CD4-positive, alpha-beta memory T cell (primary cell): ENCODE measurements at regions of chr17 and their contacts with region 1.

Region 1: GRCh38 chr17:78708510-78708973 is 73.5 kb downstream of the CYTH1 start:
- DNase-seq: peak; percentile 53 to 65 (median 59)
- H3K4me3 ChIP-seq: no peak overlapping the region
- H3K4me3 Mint-ChIP-seq: peak overlapping the region in 7 of 8 donors; percentile 43 to 78 (median 66)
- H3K27ac ChIP-seq: peak overlapping the region; percentile 31
- H3K27ac Mint-ChIP-seq: peak overlapping the region; percentile 83 to 95 (median 91)
- H3K4me1 ChIP-seq: peaks cover 54% of the 10 kb centered on the region
- H3K4me1 Mint-ChIP-seq: peaks cover 41 to 65% (median 54%) of the 10 kb centered on the region in 4 donors
- H3K27me3 ChIP-seq: no peaks in the 10 kb centered on the region
- H3K27me3 Mint-ChIP-seq: no peaks in the 10 kb centered on the region

Region 2: GRCh38 chr17:78497115-78497540 is 211.4 kb before region 1 on chr17:
- CTCF ChIA-PET with region 1: interaction called, 11 read pairs
- POLR2A ChIA-PET with region 1: interaction called, 4 read pairs
- intact Hi-C with region 1: loop called (anchors 1 kb)
- DNase-seq: peak; percentile 47 to 63 (median 58)
- H3K4me3 ChIP-seq: no peak overlapping the region
- H3K4me3 Mint-ChIP-seq: no peak overlapping the region
- H3K27ac ChIP-seq: no peak overlapping the region
- H3K27ac Mint-ChIP-seq: no peak overlapping the region
- H3K4me1 ChIP-seq: no peaks in the 10 kb centered on the region
- H3K4me1 Mint-ChIP-seq: no peaks in the 10 kb centered on the region
- H3K27me3 ChIP-seq: no peaks in the 10 kb centered on the region
- H3K27me3 Mint-ChIP-seq: no peaks in the 10 kb centered on the region

Region 3: GRCh38 chr17:78611607-78612006 is 96.9 kb before region 1 on chr17:
- CTCF ChIA-PET with region 1: no interaction called
- POLR2A ChIA-PET with region 1: no interaction called
- intact Hi-C with region 1: no loop called
- DNase-seq: no peak
- H3K4me3 ChIP-seq: no peak overlapping the region
- H3K4me3 Mint-ChIP-seq: no peak overlapping the region
- H3K27ac ChIP-seq: no peak overlapping the region
- H3K27ac Mint-ChIP-seq: no peak overlapping the region
- H3K4me1 ChIP-seq: no peaks in the 10 kb centered on the region
- H3K4me1 Mint-ChIP-seq: no peaks in the 10 kb centered on the region
- H3K27me3 ChIP-seq: no peaks in the 10 kb centered on the region
- H3K27me3 Mint-ChIP-seq: peaks cover 0 to 2% of the 10 kb centered on the region in 2 donors

Region 4: GRCh38 chr17:78645421-78646295 is 62.9 kb before region 1 on chr17:
- CTCF ChIA-PET with region 1: no interaction called
- POLR2A ChIA-PET with region 1: no interaction called
- intact Hi-C with region 1: no loop called
- DNase-seq: peak; percentile 34 to 78 (median 59)
- H3K4me3 ChIP-seq: no peak overlapping the region
- H3K4me3 Mint-ChIP-seq: peak overlapping the region; percentile 59 to 90 (median 85)
- H3K27ac ChIP-seq: peak overlapping the region; percentile 3
- H3K27ac Mint-ChIP-seq: peak overlapping the region; percentile 84 to 97 (median 92)
- H3K4me1 ChIP-seq: peaks cover 13% of the 10 kb centered on the region
- H3K4me1 Mint-ChIP-seq: peaks cover 6 to 16% (median 11%) of the 10 kb centered on the region in 4 donors
- H3K27me3 ChIP-seq: no peaks in the 10 kb centered on the region
- H3K27me3 Mint-ChIP-seq: peaks cover 3 to 7% of the 10 kb centered on the region in 2 donors

Region 5: DNA sequence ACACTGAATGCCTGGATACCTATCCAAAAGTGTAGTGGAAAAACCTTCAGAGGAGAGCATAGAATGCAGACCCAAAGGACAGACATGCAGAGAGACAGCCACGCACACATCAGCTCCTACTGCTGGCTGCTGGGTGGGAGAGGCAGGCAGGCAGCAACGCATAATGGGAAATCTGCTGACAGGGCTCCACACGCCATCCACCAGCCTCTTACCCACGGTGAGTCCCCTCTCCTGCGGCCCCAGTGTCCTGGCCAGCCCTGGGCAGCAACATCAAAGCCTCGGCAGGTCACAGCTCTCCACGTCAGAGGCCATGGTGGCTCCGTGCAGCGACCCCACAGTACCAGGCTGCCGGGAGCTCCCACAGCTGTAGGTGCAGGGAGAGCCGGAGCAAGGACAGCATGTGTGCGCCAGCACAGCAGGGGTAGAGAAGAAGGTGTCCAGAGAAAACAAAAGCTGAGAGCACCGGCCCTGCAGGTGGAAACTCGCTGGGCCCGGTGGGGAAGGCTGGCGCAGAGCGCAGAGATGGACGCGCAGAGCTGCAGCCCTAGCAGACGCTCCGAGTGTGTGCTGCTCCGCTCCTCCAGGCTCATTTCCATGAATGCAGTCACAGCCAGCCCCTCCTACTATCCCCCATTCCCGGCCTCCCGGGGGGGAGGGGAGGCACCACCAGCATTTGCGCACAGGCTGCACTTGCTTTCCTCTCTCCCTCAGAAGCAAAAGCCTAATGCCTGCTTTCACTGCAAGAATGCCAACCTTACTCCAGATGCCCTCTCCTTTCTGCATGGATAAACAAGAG is 14.7 kb after region 1 on chr17:
- CTCF ChIA-PET with region 1: interaction called, 24 read pairs
- POLR2A ChIA-PET with region 1: interaction called, 20 read pairs
- intact Hi-C with region 1: no loop called
- DNase-seq: no peak
- H3K4me3 ChIP-seq: no peak overlapping the region
- H3K4me3 Mint-ChIP-seq: peak overlapping the region; percentile 56 to 91 (median 70)
- H3K27ac ChIP-seq: no peak overlapping the region
- H3K27ac Mint-ChIP-seq: peak overlapping the region in 6 of 7 donors; percentile 77 to 92 (median 86)
- H3K4me1 ChIP-seq: peaks cover 100% of the 10 kb centered on the region
- H3K4me1 Mint-ChIP-seq: peaks cover 77 to 97% (median 90%) of the 10 kb centered on the region in 4 donors
- H3K27me3 ChIP-seq: no peaks in the 10 kb centered on the region
- H3K27me3 Mint-ChIP-seq: no peaks in the 10 kb centered on the region

Region 6: DNA sequence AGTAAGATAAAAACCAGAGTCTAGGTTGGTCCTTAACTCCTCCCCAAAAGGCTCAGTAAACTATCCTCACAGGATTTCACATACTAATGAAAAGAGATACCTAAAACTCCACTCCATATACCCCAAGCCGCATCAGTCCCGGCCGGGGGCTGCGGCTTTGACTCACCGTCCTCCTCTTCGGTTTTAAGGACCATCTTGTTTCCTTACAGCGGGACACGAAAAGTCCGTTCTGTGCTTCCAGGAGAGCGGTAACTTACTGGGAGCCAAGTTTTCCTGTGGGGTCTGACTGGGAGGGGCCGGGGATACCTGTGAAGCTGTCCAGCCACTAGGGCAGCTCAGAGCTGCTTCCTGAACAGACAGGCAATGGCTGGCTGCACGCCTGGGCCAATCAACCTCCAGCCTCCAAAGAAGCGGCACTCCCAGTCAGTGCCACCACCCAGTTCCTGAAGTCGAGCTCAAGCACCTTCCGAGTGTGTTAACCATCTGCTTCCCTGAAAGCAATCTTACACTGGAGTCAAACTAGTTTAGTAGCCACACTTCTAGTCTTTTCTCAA is 28.1 kb after region 1 on chr17:
- CTCF ChIA-PET with region 1: interaction called, 15 read pairs
- POLR2A ChIA-PET with region 1: interaction called, 5 read pairs
- intact Hi-C with region 1: no loop called
- DNase-seq: peak; percentile 69 to 84 (median 77)
- H3K4me3 ChIP-seq: peak overlapping the region; percentile 64 to 71
- H3K4me3 Mint-ChIP-seq: peak overlapping the region; percentile 91 to 98 (median 98)
- H3K27ac ChIP-seq: peak overlapping the region; percentile 82
- H3K27ac Mint-ChIP-seq: peak overlapping the region; percentile 85 to 98 (median 95)
- H3K4me1 ChIP-seq: peaks cover 89% of the 10 kb centered on the region
- H3K4me1 Mint-ChIP-seq: peaks cover 69 to 94% (median 83%) of the 10 kb centered on the region in 4 donors
- H3K27me3 ChIP-seq: no peaks in the 10 kb centered on the region
- H3K27me3 Mint-ChIP-seq: no peaks in the 10 kb centered on the region

Region 7: GRCh38 chr17:78769196-78769773 is 60.7 kb after region 1 on chr17:
- CTCF ChIA-PET with region 1: interaction called, 12 read pairs
- POLR2A ChIA-PET with region 1: interaction called, 3 read pairs
- intact Hi-C with region 1: no loop called
- DNase-seq: peak in 2 of 5 donors; percentile 44 to 54
- H3K4me3 ChIP-seq: peak overlapping the region in 1 of 2 donors; percentile 7
- H3K4me3 Mint-ChIP-seq: no peak overlapping the region
- H3K27ac ChIP-seq: peak overlapping the region; percentile 49
- H3K27ac Mint-ChIP-seq: no peak overlapping the region
- H3K4me1 ChIP-seq: peaks cover 98% of the 10 kb centered on the region
- H3K4me1 Mint-ChIP-seq: peaks cover 32 to 34% (median 33%) of the 10 kb centered on the region in 4 donors
- H3K27me3 ChIP-seq: no peaks in the 10 kb centered on the region
- H3K27me3 Mint-ChIP-seq: no peaks in the 10 kb centered on the region

Region 8: DNA sequence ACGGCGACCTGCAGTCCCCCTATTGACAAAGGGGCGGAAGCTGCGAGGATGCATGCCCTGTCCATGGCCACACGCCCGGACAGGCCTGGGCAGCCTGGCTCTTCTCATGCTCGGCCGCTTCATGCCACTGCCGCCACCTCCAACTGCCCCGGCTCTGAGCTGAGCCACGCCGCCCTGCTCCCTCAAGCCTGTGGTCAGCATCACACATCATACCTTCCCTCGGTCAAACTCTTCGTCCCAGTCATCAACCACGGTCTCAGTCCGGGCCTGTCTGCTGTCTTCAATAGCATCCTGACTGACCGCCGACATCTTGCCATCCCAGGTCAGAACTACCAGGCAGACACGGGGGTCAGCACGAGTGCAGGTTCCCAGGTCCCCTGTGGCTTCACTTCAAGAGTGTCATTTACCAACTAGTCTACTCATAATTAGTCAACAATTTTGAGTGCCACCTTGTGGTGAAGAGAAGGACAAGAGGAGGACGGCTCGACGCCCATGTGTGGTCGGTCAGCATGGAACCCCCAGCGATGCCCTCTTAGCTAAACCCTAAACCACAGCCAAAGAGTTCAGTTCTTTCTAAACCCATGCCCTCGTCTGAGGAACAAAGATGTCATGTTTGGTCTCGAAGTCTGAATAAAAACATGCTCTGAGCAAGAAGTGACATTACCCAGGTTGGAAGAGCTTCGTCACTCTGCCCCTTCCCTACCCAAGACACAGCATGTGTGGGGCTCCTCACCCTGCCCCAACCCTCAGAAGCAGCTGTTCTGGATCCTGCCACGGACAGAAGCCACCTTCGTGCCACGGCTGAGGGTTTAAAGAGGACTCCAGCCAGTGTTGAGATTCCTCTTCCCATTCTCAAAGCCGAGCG is 90.4 kb after region 1 on chr17:
- CTCF ChIA-PET with region 1: interaction called, 18 read pairs
- POLR2A ChIA-PET with region 1: interaction called, 3 read pairs
- intact Hi-C with region 1: loop called (anchors 1 kb)
- DNase-seq: peak in 4 of 5 donors; percentile 50 to 65 (median 57)
- H3K4me3 ChIP-seq: no peak overlapping the region
- H3K4me3 Mint-ChIP-seq: peak overlapping the region; percentile 28 to 79 (median 66)
- H3K27ac ChIP-seq: no peak overlapping the region
- H3K27ac Mint-ChIP-seq: peak overlapping the region; percentile 87 to 99 (median 94)
- H3K4me1 ChIP-seq: peaks cover 37% of the 10 kb centered on the region
- H3K4me1 Mint-ChIP-seq: peaks cover 46 to 79% (median 62%) of the 10 kb centered on the region in 4 donors
- H3K27me3 ChIP-seq: no peaks in the 10 kb centered on the region
- H3K27me3 Mint-ChIP-seq: no peaks in the 10 kb centered on the region

Region 9: DNA sequence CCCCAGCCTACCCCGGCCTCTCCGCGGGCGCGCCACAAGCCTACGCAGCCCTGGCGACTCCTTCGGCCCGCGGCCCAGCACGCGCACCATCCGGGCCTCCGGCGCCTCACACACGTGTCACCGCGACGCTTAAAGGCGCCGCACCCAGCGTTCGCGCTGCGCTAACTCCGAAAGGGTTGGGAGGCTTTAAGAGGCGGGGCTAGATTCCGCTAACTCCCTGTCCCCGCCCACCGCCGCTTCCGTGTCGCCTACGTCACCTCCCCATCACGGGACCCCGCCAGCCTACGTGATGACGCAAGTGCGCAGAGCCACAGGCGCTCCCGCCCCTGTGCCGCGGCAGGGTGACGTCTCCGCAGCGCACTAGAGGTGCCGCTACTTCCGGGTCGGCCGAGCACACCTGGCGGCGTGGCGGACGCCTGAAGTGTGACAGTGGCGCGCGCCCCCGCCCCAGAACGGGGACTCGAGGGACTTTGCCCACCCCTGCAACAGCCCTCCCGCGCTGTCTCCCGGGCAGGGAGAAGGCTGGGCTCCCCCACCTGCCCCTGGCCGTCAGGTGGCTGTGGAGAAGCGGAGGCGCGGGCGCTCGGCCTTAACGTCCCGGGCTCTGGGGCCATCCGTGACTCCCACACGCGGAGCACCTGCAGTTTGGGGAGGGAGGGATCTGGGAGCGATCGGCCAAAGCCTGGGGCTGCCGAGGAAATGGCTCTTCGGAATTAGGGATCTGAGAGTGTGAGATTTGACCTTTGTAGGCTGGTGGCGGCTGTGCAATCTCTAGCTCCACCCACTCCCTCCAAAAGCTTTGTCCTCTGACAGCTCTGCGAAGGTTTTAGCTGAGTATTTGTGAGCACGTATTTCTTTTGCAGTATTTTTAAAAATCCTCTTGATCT is 132.4 kb after region 1 on chr17 and contains the start of gene USP36:
- CTCF ChIA-PET with region 1: interaction called, 24 read pairs
- POLR2A ChIA-PET with region 1: no interaction called
- intact Hi-C with region 1: no loop called
- DNase-seq: peak; percentile 99 to 100 (median 99)
- H3K4me3 ChIP-seq: peak within 1 kb of the TSS; percentile 74 to 89
- H3K4me3 Mint-ChIP-seq: peak within 1 kb of the TSS; percentile 93 to 99 (median 96)
- H3K27ac ChIP-seq: peak within 1 kb of the TSS; percentile 95
- H3K27ac Mint-ChIP-seq: peak within 1 kb of the TSS; percentile 93 to 99 (median 99)
- H3K4me1 ChIP-seq: peaks cover 40% of the 10 kb centered on the region
- H3K4me1 Mint-ChIP-seq: peaks cover 37 to 73% (median 49%) of the 10 kb centered on the region in 4 donors
- H3K27me3 ChIP-seq: no peaks in the 10 kb centered on the region
- H3K27me3 Mint-ChIP-seq: no peaks in the 10 kb centered on the region
- total RNA-seq, gene USP36: 181 to 183 TPM

Region 10: DNA sequence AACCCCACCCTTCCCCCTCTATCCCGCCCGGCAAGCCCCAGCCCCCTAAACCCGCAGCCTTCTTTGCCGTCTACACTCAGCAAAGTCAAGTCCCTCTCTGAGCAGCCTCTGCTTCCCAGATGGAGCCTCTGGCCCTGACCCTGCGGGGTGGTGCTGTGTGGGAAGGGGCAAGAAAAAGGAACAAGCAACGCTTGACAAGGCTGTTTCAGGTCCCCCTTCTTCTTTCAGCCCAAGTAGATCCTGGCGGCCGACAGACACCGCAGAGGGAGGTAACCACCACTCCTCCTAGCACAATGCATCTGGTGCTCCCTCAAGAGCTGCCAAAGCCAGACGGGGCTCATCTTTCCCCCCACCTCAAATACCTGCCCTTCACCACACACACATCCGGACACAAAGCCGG is 544.3 kb after region 1 on chr17:
- CTCF ChIA-PET with region 1: no interaction called
- POLR2A ChIA-PET with region 1: no interaction called
- intact Hi-C with region 1: no loop called
- DNase-seq: no peak
- H3K4me3 ChIP-seq: no peak overlapping the region
- H3K4me3 Mint-ChIP-seq: no peak overlapping the region
- H3K27ac ChIP-seq: no peak overlapping the region
- H3K27ac Mint-ChIP-seq: no peak overlapping the region
- H3K4me1 ChIP-seq: no peaks in the 10 kb centered on the region
- H3K4me1 Mint-ChIP-seq: no peaks in the 10 kb centered on the region
- H3K27me3 ChIP-seq: no peaks in the 10 kb centered on the region
- H3K27me3 Mint-ChIP-seq: peaks cover 32% of the 10 kb centered on the region in 2 donors